Activated CD4-positive, alpha-beta T cell treated with anti-CD3 and anti-CD28 coated beads for 36 hours (primary cell): ENCODE measurements at regions of chr15 and their contacts with region 1.

Region 1: DNA sequence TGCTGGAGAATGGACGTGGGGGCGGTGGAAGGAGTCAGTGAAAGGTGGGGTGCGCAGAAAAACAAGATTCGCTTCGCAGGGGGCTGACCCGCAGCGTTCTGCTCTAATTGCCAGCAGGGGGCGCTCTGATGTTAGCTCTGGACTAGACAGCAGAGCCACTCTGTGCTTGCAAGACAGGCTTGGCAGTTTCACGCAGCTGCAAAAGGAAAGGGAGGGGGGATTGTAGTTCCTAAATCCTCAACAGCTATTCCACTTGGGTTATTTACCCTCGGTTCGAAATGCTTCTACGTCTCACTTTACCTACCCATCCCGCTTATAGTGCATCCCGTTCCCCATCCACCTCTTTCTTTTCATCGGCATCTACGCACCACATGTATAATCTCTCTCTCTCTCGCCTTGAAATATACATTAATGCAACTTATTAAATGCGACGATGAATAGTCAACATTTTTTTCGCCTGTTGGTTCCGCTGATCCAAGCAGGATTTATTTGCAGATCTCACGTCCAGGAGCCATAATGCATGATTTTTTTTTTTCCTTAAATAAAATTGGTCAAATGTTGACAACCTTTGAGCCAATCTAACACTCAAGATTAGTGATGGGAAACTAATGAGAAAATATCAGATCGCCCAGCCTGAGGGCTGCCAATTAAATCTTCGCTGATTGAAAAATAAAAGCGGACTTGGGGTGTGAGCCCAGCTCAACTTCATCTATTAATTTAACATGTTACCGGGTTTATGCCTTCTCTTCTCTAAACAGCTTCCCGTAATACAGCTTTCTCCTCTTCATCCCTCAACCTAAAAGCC is 216.4 kb downstream of the MEIS2 start:
- DNase-seq: peak; percentile 89
- ATAC-seq: peak; percentile 65
- H3K4me3 Mint-ChIP-seq: no peak overlapping the region
- H3K27ac Mint-ChIP-seq: no peak overlapping the region
- H3K4me1 Mint-ChIP-seq: peaks cover 23% of the 10 kb centered on the region
- H3K27me3 Mint-ChIP-seq: peaks cover 89% of the 10 kb centered on the region

Region 2: DNA sequence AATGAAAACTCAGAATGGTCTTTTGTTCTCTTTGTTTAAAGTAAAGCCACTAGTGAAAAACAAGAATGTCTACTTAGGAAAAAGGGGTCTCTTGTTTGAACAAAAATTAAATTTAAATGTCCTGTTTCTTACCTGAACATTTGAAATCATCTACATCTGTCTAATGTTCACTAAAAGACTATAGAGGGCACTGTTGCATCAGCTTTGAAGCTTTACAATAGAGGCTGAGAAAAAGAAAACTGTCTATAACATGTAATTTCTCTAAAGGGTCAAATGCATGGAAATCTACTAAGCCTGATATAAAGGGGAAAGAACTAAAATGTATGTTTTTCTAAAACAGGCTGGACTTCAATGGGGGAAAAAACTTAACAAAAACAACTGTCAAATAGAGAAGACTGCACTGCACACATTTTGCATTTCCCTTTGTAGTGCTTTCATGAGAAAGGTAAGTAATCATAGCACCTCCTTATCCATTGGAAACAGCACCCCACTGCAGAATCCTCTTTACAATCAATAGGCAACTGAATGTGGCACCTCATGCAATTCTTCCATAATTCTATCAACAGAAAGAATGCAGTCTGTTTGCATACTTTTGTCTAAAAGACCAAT is 1364.3 kb before region 1 on chr15:
- CTCF ChIA-PET with region 1: no interaction called
- POLR2A ChIA-PET with region 1: no interaction called
- intact Hi-C with region 1: loop called in 1 of 2 experiments (anchors 5 kb)
- DNase-seq: no peak
- ATAC-seq: peak; percentile 65
- H3K4me3 Mint-ChIP-seq: no peak overlapping the region
- H3K27ac Mint-ChIP-seq: no peak overlapping the region
- H3K4me1 Mint-ChIP-seq: peaks cover 4% of the 10 kb centered on the region
- H3K27me3 Mint-ChIP-seq: no peaks in the 10 kb centered on the region

Region 3: DNA sequence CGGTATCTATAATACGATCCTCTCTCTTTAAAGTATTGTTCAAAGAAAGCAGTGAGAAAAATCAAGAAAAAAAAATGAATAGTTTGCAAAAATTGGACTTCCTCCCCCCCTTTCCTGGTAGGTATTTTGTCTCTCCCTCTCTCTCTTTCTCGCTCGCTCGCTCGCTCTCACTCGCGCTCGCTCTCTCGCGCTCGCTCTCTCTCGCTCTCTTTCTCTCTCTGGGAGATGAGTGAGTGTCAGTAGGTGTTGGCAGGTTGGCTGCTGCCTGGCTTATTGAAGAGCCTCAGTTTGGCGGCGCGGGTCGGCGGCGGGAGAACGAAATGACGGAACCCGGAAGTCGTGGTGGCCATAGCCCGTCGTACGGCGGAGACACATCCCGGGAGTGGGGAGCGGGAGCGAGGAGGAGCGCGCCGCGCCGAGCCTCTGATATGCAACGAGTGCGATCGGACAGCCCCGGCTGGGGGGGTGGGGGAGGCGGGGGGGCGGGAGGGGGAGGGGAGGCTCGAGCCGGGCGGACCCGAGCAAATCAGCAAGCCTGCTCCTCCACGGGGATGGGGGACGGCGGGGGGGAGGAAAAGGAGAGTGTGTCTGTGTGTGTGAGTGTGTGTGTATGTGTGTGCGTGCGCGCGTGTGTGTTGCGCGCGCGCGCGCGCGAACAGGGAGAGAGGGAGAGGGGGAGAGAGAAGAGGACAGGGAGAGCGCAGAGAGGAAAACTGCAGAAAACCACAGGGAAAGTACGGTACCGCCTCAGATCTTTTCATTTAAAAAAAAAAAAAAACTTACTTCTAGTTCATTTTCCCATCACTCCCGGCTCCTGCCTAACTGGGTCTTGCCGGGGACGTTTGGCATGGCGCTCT is 216.4 kb after region 1 on chr15 and contains the start of gene MEIS2:
- CTCF ChIA-PET with region 1: no interaction called
- POLR2A ChIA-PET with region 1: no interaction called
- intact Hi-C with region 1: loop called in 1 of 2 experiments (anchors 2 kb)
- DNase-seq: peak; percentile 70
- ATAC-seq: peak; percentile 63
- H3K4me3 Mint-ChIP-seq: peak within 1 kb of the TSS; percentile 80
- H3K27ac Mint-ChIP-seq: peak within 1 kb of the TSS; percentile 51
- H3K4me1 Mint-ChIP-seq: peaks cover 37% of the 10 kb centered on the region
- H3K27me3 Mint-ChIP-seq: peaks cover 82% of the 10 kb centered on the region
- total RNA-seq, gene MEIS2: not detected

Region 4: GRCh38 chr15:37134699-37135131 is 250.8 kb after region 1 on chr15:
- CTCF ChIA-PET with region 1: interaction called, 3 read pairs
- POLR2A ChIA-PET with region 1: no interaction called
- intact Hi-C with region 1: loop called in 1 of 2 experiments (anchors 1 kb)
- DNase-seq: no peak
- ATAC-seq: no peak
- H3K4me3 Mint-ChIP-seq: no peak overlapping the region
- H3K27ac Mint-ChIP-seq: no peak overlapping the region
- H3K4me1 Mint-ChIP-seq: no peaks in the 10 kb centered on the region
- H3K27me3 Mint-ChIP-seq: peaks cover 12% of the 10 kb centered on the region

Region 5: DNA sequence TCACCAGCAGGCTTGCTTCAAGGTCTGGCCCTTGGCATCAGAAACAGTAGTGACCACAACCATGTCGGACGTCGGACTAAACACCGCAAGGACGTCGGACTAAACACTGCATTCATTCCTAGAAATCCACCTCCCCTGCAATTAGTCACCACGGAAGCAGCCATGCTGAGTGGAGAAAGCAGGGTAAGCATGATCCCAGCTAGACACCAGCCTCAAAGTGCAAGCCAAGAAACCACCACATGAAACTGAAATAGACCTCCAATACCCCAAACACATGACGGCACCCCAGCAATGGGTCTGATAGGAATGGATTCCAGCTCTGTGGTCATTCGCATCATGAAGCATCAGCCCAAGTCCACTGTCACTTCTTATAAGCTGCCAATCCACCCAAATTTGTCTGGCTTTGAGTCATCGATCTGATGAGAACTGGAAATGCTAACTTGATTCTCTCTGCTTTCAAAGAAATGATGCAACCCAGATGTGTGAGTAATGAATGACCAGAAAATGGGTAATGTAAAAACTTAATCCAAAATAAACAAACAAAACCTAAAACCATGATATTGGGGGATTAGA is 702.2 kb after region 1 on chr15:
- CTCF ChIA-PET with region 1: no interaction called
- POLR2A ChIA-PET with region 1: no interaction called
- intact Hi-C with region 1: no loop called
- DNase-seq: no peak
- ATAC-seq: no peak
- H3K4me3 Mint-ChIP-seq: no peak overlapping the region
- H3K27ac Mint-ChIP-seq: no peak overlapping the region
- H3K4me1 Mint-ChIP-seq: no peaks in the 10 kb centered on the region
- H3K27me3 Mint-ChIP-seq: no peaks in the 10 kb centered on the region

Region 6: GRCh38 chr15:37880009-37880834 is 996.3 kb after region 1 on chr15:
- CTCF ChIA-PET with region 1: interaction called, 3 read pairs
- POLR2A ChIA-PET with region 1: no interaction called
- intact Hi-C with region 1: loop called (anchors 1 to 10 kb)
- DNase-seq: peak; percentile 7
- ATAC-seq: no peak
- H3K4me3 Mint-ChIP-seq: no peak overlapping the region
- H3K27ac Mint-ChIP-seq: no peak overlapping the region
- H3K4me1 Mint-ChIP-seq: no peaks in the 10 kb centered on the region
- H3K27me3 Mint-ChIP-seq: peaks cover 14% of the 10 kb centered on the region